ENCODE measurements at regions of chr9 and their contacts with region 1.

Region 1: GRCh38 chr9:89318123-89319014 is at the start of gene SECISBP2:
- DNase-seq: peak; percentile 98
- H3K4me3 ChIP-seq: peak within 1 kb of the TSS; percentile 58 to 94 (median 84)
- H3K27ac ChIP-seq: peak within 1 kb of the TSS; percentile 100
- H3K4me1 ChIP-seq: peaks cover 36% of the 10 kb centered on the region
- H3K27me3 ChIP-seq: no peaks in the 10 kb centered on the region
- CTCF ChIP-seq: peak; percentile 68 to 78
- POLR2A ChIP-seq: peak; percentile 97
- total RNA-seq, gene SECISBP2: 34.1 and 36.3 TPM in 2 replicates

Region 2: GRCh38 chr9:89497978-89498851 is 179.8 kb after region 1 on chr9 and contains the start of gene SEMA4D:
- CTCF ChIA-PET with region 1: no interaction called
- POLR2A ChIA-PET with region 1: no interaction called
- dilution Hi-C with region 1: no loop called
- intact Hi-C with region 1: loop called (anchors 1 kb)
- DNase-seq: peak; percentile 45
- H3K4me3 ChIP-seq: peak within 1 kb of the TSS; percentile 40 to 85 (median 79)
- H3K27ac ChIP-seq: no peak within 1 kb of the TSS
- H3K4me1 ChIP-seq: peaks cover 4% of the 10 kb centered on the region
- H3K27me3 ChIP-seq: peaks cover 2 to 4% of the 10 kb centered on the region in 2 experiments
- CTCF ChIP-seq: no peak
- POLR2A ChIP-seq: no peak
- total RNA-seq, gene SEMA4D: 14.6 and 15.7 TPM in 2 replicates

Region 3: DNA sequence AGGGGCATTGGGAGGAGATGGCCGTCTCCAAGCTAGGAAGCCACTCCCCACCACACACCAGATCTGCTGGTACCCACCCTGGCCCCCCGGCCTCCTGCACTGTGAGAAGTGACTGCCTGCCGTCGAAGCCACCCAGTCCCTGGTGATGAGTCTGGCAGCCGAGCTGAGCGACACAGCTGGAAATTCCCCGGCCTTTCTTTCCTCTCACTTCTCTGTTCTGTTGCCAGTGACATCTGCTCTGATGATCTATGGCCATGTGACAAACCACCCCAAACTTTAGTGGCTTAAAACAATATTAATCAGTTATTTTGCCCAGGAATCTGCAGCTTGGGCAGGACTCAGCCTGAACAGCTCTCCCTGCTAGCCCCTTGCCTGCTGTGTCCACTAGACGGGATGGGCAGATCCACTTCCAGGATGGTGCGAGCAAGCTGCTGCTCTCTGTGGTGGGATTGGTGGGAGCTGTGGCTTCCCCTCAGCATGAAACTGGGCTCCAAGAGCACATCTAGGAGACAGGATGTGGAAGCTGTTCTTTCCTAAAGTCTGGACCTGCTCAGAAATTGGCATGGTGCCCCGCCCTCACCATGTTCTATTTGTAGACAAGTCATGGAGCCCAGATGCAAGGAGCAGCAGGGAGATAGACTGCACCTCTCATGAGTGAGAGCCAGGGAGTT is 497.7 kb after region 1 on chr9:
- CTCF ChIA-PET with region 1: no interaction called
- POLR2A ChIA-PET with region 1: no interaction called
- dilution Hi-C with region 1: no loop called
- intact Hi-C with region 1: loop called (anchors 10 kb)
- DNase-seq: no peak
- H3K4me3 ChIP-seq: no peak overlapping the region
- H3K27ac ChIP-seq: no peak overlapping the region
- H3K4me1 ChIP-seq: peaks cover 15% of the 10 kb centered on the region
- H3K27me3 ChIP-seq: no peaks in the 10 kb centered on the region
- CTCF ChIP-seq: no peak
- POLR2A ChIP-seq: no peak

Measured in endothelial cell of umbilical vein (primary cell).